Gastrocnemius medialis (tissue), 4 donors: ENCODE measurements at regions of chr17 and their contacts with region 1.

Region 1: GRCh38 chr17:1055751-1056645 is 59.1 kb downstream of the TIMM22 start:
- DNase-seq: peak; percentile 32 to 59
- ATAC-seq: peak; percentile 81 to 90
- H3K4me3 ChIP-seq: no peak overlapping the region
- H3K27ac ChIP-seq: peak overlapping the region in 3 of 4 donors; percentile 27 to 58 (median 37)
- H3K4me1 ChIP-seq: peaks cover 5 to 6% of the 10 kb centered on the region in 2 donors
- H3K27me3 ChIP-seq: no peaks in the 10 kb centered on the region
- CTCF ChIP-seq: peak; percentile 59 to 86 (median 83)
- POLR2A ChIP-seq: no peak

Region 2: DNA sequence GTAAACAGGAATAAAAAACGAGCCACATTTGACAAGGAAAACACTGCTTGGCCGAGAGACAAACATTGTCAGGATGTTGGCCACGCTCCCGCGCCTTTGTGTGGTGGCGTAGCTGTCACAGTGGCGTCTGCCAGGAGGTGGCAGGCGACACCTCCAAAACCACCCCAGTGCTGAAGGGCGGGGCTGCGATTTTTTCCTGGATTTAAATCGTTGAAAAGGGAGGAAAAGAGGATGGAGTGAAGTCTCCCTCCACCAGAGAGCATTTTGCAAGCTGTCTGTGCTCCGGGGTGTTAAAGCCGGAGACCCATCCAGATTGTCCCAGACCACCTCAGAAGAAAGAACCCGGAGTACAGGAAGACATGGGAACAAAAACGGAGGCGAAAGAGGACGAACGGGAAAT is 261.1 kb before region 1 on chr17:
- in situ Hi-C with region 1: no loop called
- intact Hi-C with region 1: loop called (anchors 1 kb)
- DNase-seq: peak; percentile 79 to 82
- ATAC-seq: peak; percentile 76 to 80
- H3K4me3 ChIP-seq: peak overlapping the region; percentile 27 to 74 (median 51)
- H3K27ac ChIP-seq: peak overlapping the region; percentile 67 to 78 (median 74)
- H3K4me1 ChIP-seq: peaks cover 27 to 30% of the 10 kb centered on the region in 2 donors
- H3K27me3 ChIP-seq: no peaks in the 10 kb centered on the region
- CTCF ChIP-seq: peak; percentile 90 to 96 (median 92)
- POLR2A ChIP-seq: no peak

Region 3: GRCh38 chr17:979538-980405 is 76.2 kb before region 1 on chr17 and contains the start of gene NXN:
- in situ Hi-C with region 1: no loop called
- intact Hi-C with region 1: no loop called
- DNase-seq: peak; percentile 77 to 82
- ATAC-seq: peak; percentile 74 to 77
- H3K4me3 ChIP-seq: peak within 1 kb of the TSS; percentile 80 to 96 (median 88)
- H3K27ac ChIP-seq: peak within 1 kb of the TSS; percentile 88 to 96 (median 91)
- H3K4me1 ChIP-seq: peaks cover 43 to 45% of the 10 kb centered on the region in 2 donors
- H3K27me3 ChIP-seq: no peaks in the 10 kb centered on the region
- CTCF ChIP-seq: peak in 2 of 5 experiments; percentile 23 to 35
- POLR2A ChIP-seq: peak; percentile 91 to 97
- total RNA-seq, gene NXN: 55.6 to 86.4 (median 62.7) TPM

Region 4: DNA sequence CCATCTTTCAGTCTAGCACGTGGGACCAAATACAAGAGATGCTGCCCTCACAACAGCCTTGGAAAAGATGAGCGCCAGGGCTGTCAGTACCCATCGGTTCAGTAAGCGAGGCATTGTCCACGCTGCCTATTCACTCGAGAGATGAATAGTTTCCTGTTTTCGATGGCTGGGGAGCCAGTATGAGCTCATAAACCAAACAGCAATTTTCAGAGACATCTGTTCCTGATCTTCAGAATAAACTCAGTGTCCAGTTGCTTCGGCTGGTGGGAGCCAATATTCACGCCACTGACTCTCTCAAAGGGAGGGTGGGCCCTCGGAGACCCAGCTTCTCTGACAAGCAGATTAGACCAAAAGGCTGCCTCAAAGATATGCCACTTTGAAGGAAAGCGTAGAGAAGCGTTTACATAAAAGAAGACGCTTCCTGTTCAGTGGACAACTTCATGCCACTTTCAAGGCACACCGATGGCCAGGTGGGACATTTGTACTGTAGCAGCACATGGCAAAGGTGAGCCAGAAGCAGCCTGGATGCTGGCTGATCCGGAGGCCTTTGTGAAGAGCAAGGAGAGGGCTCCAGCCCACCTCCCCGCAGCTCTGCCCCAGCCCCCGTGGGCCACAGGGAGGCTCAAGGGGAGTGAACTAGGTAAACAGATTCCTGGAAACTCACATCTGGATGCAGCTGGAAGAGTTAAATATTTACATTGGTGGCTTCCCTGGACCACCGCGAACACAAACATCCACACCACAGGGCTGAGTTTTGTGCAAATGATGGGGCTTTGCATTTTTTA is 53.0 kb before region 1 on chr17:
- in situ Hi-C with region 1: loop called in 1 of 4 experiments (anchors 5 kb)
- intact Hi-C with region 1: no loop called
- DNase-seq: no peak
- ATAC-seq: no peak
- H3K4me3 ChIP-seq: no peak overlapping the region
- H3K27ac ChIP-seq: peak overlapping the region; percentile 85 to 94 (median 90)
- H3K4me1 ChIP-seq: peaks cover 77 to 86% of the 10 kb centered on the region in 2 donors
- H3K27me3 ChIP-seq: no peaks in the 10 kb centered on the region
- CTCF ChIP-seq: no peak
- POLR2A ChIP-seq: no peak

Region 5: GRCh38 chr17:1147661-1148060 is 91.7 kb after region 1 on chr17:
- in situ Hi-C with region 1: no loop called
- intact Hi-C with region 1: no loop called
- DNase-seq: no peak
- ATAC-seq: no peak
- H3K4me3 ChIP-seq: no peak overlapping the region
- H3K27ac ChIP-seq: no peak overlapping the region
- H3K4me1 ChIP-seq: no peaks in the 10 kb centered on the region
- H3K27me3 ChIP-seq: peaks cover 0 to 3% (median 0%) of the 10 kb centered on the region in 3 donors
- CTCF ChIP-seq: peak in 1 of 5 experiments; percentile 31
- POLR2A ChIP-seq: no peak